RWPE1 (cell line): ENCODE measurements at regions of chr2 and their contacts with region 1.

Region 1: GRCh38 chr2:101341901-101342624 is 33.6 kb upstream of the RNF149 start:
- DNase-seq: peak; percentile 72
- H3K27ac ChIP-seq: no peak overlapping the region
- CTCF ChIP-seq: peak; percentile 82

Region 2: DNA sequence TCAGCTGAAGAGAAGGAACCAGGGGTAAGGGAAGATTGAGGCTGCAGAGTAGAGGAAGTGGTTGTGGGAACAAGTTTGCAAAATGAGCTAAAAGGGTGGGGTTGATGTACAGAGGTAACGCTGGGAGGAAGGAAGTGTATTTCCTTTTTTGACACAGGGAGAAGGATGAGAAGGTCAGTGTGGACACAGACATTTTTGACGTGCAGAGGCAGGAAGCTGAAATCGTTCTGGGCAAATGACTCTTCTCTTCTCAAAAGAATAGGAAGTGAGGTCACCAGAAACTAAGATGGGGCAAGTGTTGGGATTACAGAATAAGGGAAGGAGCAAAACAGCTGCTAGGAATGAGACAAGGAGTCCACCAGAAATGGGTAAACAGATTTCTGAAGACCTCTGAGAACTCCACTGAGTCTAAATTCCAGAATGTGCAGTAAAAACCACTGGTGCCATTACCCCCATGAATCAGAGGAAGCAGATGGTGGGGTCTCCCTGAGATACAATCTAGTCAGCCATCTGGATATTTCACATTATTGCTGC is 13.5 kb before region 1 on chr2:
- CTCF ChIA-PET with region 1: interaction called, 11 read pairs
- POLR2A ChIA-PET with region 1: no interaction called
- DNase-seq: peak; percentile 52
- H3K27ac ChIP-seq: no peak overlapping the region
- CTCF ChIP-seq: no peak

Region 3: DNA sequence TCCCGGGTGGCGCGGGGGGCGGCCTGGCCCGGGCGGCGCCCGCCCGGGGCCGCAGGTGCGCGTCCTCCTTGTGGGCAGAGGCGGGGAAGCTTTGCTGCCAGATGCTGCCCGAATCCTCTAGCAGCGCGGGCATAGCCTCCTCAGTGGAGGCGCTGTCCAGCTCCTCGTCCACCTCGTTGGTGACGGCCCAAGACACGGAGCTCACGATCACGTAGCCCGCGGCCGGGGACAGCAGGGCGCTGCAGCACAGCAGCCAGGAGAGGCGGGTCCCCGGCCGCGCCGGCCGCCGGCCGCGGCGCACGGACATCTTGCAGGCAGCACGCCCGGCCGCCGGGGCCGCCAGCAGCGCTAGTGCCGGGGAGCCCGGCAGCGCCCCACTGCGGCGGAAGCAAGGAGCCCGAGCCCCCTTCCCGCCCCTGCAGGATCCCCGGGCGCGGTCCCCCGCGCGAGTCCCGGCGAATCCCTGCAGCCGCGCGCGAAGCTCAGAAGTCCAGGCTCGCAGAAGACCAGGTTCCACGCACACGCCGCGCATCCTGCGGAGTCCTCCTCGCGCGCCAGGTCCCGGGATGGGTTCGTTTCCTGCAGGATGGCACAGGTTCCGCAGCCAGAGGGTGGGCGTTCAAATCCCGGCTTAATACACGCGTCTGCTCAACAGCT is 45.2 kb after region 1 on chr2 and contains the start of gene CREG2:
- CTCF ChIA-PET with region 1: interaction called, 29 read pairs
- POLR2A ChIA-PET with region 1: no interaction called
- DNase-seq: peak; percentile 67
- H3K27ac ChIP-seq: peak within 1 kb of the TSS; percentile 48
- CTCF ChIP-seq: peak; percentile 75